Cardiac septum (tissue), 1 donor: ENCODE measurements at regions of chr5 and their contacts with region 1.

Region 1: DNA sequence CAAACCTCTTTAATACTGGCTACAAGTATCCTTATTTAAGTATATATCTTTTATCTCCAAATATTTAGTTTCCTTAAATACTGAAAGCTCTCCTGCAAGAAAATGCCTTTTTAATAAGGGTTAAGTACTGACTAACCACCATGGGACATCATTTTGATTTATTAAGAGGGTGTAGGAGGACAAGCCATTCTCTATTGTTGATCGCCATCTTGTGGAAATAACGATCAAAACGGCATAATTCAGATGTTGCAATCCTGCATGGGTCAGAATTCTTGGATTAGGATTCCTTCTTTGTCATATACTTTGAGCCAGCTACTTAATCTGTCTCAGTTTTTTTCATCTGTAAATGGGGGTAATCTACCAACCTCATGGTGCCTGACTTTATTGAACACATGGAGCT is 28.7 kb upstream of the C5orf46 start:
- DNase-seq: no peak

Region 2: GRCh38 chr5:147857302-147858129 is 77.5 kb before region 1 on chr5:
- intact Hi-C with region 1: loop called (anchors 2 kb)
- DNase-seq: no peak

Region 3: GRCh38 chr5:147887930-147888329 is 47.1 kb before region 1 on chr5:
- intact Hi-C with region 1: loop called (anchors 2 kb)
- DNase-seq: no peak

Region 4: DNA sequence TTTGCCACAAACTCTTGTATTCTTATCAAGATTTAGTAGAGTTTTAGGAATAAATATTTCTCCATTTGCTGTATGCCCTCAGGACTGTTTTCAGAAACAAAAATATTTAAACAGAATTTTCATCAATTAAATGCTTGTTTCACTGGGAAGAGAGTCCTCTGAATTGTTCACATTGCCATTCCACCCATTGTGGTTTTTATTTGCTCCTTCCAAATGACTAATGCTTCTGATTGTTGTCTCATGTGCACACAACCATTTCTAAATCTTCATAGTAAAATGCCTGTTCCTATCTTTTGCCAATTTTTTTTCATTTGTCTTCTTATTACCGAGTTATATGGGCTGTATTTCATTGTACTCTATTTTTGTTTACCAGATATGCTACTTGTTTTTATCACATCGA is 313.9 kb after region 1 on chr5:
- intact Hi-C with region 1: no loop called
- DNase-seq: no peak